Heart right ventricle (tissue), 16 donors: ENCODE measurements at regions of chr10 and their contacts with region 1.

Region 1: GRCh38 chr10:96586419-96587263 is at the start of gene TM9SF3:
- DNase-seq: peak; percentile 94 to 95
- ATAC-seq: peak; percentile 91 to 96 (median 94)
- H3K4me3 ChIP-seq: peak within 1 kb of the TSS; percentile 69 to 98 (median 93)
- H3K27ac ChIP-seq: peak within 1 kb of the TSS; percentile 92 to 100 (median 98)
- H3K4me1 ChIP-seq: peaks cover 0 to 66% (median 56%) of the 10 kb centered on the region in 9 donors
- H3K27me3 ChIP-seq: no peaks in the 10 kb centered on the region
- CTCF ChIP-seq: peak in 4 of 9 donors; percentile 12 to 30 (median 28)
- total RNA-seq, gene TM9SF3: 50.7 to 83.9 (median 62.4) TPM

Region 2: GRCh38 chr10:96513698-96514561 is 72.7 kb before region 1 on chr10 and contains the start of gene TLL2:
- intact Hi-C with region 1: loop called in 1 of 10 experiments (anchors 10 kb)
- DNase-seq: peak; percentile 88 to 90
- ATAC-seq: peak; percentile 93 to 97 (median 96)
- H3K4me3 ChIP-seq: peak within 1 kb of the TSS; percentile 46 to 89 (median 62)
- H3K27ac ChIP-seq: peak within 1 kb of the TSS in 8 of 10 donors; percentile 39 to 71 (median 67)
- H3K4me1 ChIP-seq: peaks cover 3 to 25% (median 24%) of the 10 kb centered on the region in 9 donors
- H3K27me3 ChIP-seq: peaks cover 0 to 35% (median 3%) of the 10 kb centered on the region in 7 donors
- CTCF ChIP-seq: peak; percentile 48 to 95 (median 77)
- total RNA-seq, gene TLL2: 2.8 to 9.2 (median 6.9) TPM

Region 3: GRCh38 chr10:96618653-96619052 is 32.0 kb after region 1 on chr10:
- intact Hi-C with region 1: loop called in 1 of 10 experiments (anchors 2 kb)
- DNase-seq: peak; percentile 23 to 51
- ATAC-seq: peak; percentile 78 to 89 (median 84)
- H3K4me3 ChIP-seq: no peak overlapping the region
- H3K27ac ChIP-seq: peak overlapping the region; percentile 56 to 89 (median 84)
- H3K4me1 ChIP-seq: peaks cover 8 to 56% (median 33%) of the 10 kb centered on the region in 9 donors
- H3K27me3 ChIP-seq: no peaks in the 10 kb centered on the region
- CTCF ChIP-seq: no peak